GM12878 (cell line): ENCODE measurements at regions of chr1 and their contacts with region 1.

Region 1: GRCh38 chr1:30718636-30719405 is 4.6 kb downstream of the MATN1 start:
- DNase-seq: peak; percentile 71
- ATAC-seq: peak; percentile 84
- H3K4me3 ChIP-seq: peak overlapping the region; percentile 90
- H3K27ac ChIP-seq: peak overlapping the region; percentile 93
- H3K4me1 ChIP-seq: peaks cover 18% of the 10 kb centered on the region
- H3K27me3 ChIP-seq: no peaks in the 10 kb centered on the region
- CTCF ChIP-seq: peak; percentile 86 to 95 (median 87); a peak in 5 of 6 replicates
- EP300 ChIP-seq: peak in 1 of 2 experiments; percentile 22; a peak in 1 of 4 replicates
- POLR2A ChIP-seq: peak; percentile 87
- RAD21 ChIP-seq: no peak

Region 2: GRCh38 chr1:30732277-30732996 is 13.6 kb after region 1 on chr1:
- CTCF ChIA-PET with region 1: interaction called, 81 read pairs
- POLR2A ChIA-PET with region 1: interaction called, 14 read pairs
- RAD21 ChIA-PET with region 1: interaction called, 37 read pairs
- SMC1A ChIA-PET with region 1: interaction called, 18 read pairs
- in situ Hi-C with region 1: no loop called
- intact Hi-C with region 1: no loop called
- DNase-seq: no peak
- ATAC-seq: peak; percentile 63
- H3K4me3 ChIP-seq: no peak overlapping the region
- H3K27ac ChIP-seq: no peak overlapping the region
- H3K4me1 ChIP-seq: peaks cover 23% of the 10 kb centered on the region
- H3K27me3 ChIP-seq: no peaks in the 10 kb centered on the region
- CTCF ChIP-seq: no peak
- EP300 ChIP-seq: no peak
- POLR2A ChIP-seq: peak; percentile 62; the same call in 1 of the 2 replicates
- RAD21 ChIP-seq: no peak

Region 3: DNA sequence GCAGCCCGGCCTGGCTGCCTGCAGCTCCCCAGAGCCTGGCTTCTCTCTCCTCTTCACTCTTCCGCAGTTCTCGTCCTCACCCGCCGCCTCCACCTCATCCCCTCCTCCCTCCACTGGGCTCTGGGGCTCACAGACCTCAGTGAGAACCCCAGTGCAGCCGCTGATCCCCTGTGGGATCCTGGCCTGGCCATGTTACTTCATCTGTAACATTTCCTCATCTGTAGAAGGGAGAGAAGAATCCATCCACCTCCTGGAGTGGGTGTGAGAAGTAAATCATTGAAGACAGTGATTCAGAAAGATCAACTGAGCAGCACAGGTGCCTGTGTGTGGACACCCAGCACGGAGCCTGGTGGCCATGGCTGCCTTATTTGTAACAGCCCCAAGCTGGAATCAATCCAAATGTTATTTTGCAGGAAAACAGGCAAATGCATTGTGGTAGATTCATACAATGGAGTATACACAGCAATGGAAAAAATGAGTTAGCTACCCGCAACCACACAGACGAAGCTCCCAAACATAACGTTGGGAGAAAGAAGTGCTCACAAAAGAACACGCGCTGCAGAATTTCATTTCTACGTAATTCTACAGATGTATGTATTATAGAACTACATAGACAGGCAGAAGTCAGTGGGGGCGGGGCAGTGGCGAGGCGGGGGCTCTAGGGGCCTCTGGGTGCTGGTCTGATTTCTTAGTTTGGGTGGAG is 30.0 kb after region 1 on chr1:
- CTCF ChIA-PET with region 1: interaction called, 76 read pairs
- POLR2A ChIA-PET with region 1: interaction called, 48 read pairs
- RAD21 ChIA-PET with region 1: interaction called, 211 read pairs
- SMC1A ChIA-PET with region 1: interaction called, 556 read pairs
- in situ Hi-C with region 1: no loop called
- intact Hi-C with region 1: no loop called
- DNase-seq: no peak
- ATAC-seq: peak; percentile 1; the same call in 2 of the 3 replicates
- H3K4me3 ChIP-seq: peak overlapping the region; percentile 98
- H3K27ac ChIP-seq: peak overlapping the region; percentile 93
- H3K4me1 ChIP-seq: peaks cover 87% of the 10 kb centered on the region
- H3K27me3 ChIP-seq: no peaks in the 10 kb centered on the region
- CTCF ChIP-seq: no peak
- EP300 ChIP-seq: no peak
- POLR2A ChIP-seq: no peak; the same call in 1 of the 2 replicates
- RAD21 ChIP-seq: no peak

Region 4: DNA sequence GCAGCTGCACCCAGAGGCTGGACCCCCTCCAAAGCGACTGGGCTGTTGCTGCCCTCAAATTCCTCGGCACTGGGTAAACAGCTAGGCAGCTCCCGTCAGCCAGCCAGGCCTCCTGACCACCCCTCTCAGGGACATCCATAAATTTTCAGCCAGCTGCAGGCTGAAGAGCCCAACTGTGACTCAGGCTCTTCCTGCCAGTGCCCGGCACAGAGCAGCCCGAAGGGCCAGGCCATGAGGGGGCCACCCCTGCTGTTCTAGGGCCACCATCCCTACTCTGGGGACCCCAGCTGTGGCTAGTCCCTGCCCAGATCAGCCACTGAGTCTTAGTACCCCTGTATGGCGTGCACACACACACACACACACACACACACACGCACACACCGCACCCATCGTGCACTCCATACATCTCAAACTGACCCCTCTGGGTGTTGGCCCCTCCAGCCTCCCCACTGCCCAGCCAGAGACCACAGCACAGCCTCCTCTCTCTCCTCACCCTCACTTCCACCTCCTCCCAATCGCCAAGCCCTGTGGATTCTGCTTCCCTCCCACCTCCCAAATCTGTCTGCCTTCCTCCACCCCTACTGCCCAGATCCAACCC is 44.9 kb after region 1 on chr1:
- CTCF ChIA-PET with region 1: interaction called, 41 read pairs
- POLR2A ChIA-PET with region 1: interaction called, 8 read pairs
- RAD21 ChIA-PET with region 1: interaction called, 211 read pairs
- SMC1A ChIA-PET with region 1: interaction called, 556 read pairs
- in situ Hi-C with region 1: no loop called
- intact Hi-C with region 1: no loop called
- DNase-seq: no peak
- ATAC-seq: no peak
- H3K4me3 ChIP-seq: no peak overlapping the region
- H3K27ac ChIP-seq: peak overlapping the region; percentile 87
- H3K4me1 ChIP-seq: peaks cover 82% of the 10 kb centered on the region
- H3K27me3 ChIP-seq: no peaks in the 10 kb centered on the region
- CTCF ChIP-seq: no peak
- EP300 ChIP-seq: no peak
- POLR2A ChIP-seq: no peak
- RAD21 ChIP-seq: no peak

Region 5: GRCh38 chr1:30801771-30802198 is 83.0 kb after region 1 on chr1:
- CTCF ChIA-PET with region 1: interaction called, 59 read pairs
- POLR2A ChIA-PET with region 1: no interaction called
- RAD21 ChIA-PET with region 1: interaction called, 36 read pairs
- SMC1A ChIA-PET with region 1: interaction called, 11 read pairs
- in situ Hi-C with region 1: no loop called
- intact Hi-C with region 1: no loop called
- DNase-seq: no peak
- ATAC-seq: peak; percentile 86
- H3K4me3 ChIP-seq: no peak overlapping the region
- H3K27ac ChIP-seq: no peak overlapping the region
- H3K4me1 ChIP-seq: no peaks in the 10 kb centered on the region
- H3K27me3 ChIP-seq: peaks cover 11 to 17% of the 10 kb centered on the region in 2 experiments
- CTCF ChIP-seq: peak; percentile 94 to 95 (median 95)
- EP300 ChIP-seq: no peak
- POLR2A ChIP-seq: no peak
- RAD21 ChIP-seq: peak; percentile 97

Region 6: DNA sequence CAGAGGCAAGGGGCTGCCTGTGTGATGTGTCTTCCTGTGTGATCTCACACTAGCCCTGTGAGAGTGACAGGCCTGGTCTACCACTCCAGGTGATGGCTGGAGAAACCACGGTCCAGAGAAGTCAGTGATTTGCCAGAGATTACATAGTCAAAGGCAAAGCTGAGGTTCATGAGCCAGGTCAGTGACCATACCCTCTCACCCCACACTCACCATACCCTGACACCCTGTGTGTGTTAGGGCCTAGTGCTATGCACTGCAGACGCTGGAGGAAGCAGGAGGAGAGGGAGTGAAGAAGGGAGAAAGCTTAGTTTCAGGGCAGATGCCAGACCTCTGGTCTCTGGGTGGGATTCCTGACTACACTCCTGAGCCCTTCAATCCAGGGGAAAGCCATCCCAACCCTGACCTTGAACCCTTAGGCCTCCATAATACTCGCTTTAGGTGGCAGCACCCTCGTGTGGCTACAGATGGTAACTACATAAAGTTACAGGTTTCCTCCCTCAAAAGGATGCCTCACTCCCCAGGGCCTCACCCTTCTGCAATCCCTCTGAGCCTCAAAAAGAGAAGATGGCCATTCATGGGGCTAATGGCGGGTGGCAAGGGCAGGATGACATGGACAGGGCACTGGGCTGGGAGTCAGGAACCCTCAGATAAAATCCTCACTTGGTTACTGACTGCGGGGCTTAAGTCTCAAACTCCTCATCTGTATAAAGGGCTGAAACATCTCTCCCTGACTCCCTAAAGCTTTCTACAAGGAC is 210.5 kb after region 1 on chr1:
- CTCF ChIA-PET with region 1: interaction called, 17 read pairs
- POLR2A ChIA-PET with region 1: no interaction called
- RAD21 ChIA-PET with region 1: interaction called, 19 read pairs
- SMC1A ChIA-PET with region 1: interaction called, 3 read pairs
- in situ Hi-C with region 1: no loop called
- intact Hi-C with region 1: loop called (anchors 2 kb)
- DNase-seq: no peak
- ATAC-seq: peak; percentile 91
- H3K4me3 ChIP-seq: no peak overlapping the region
- H3K27ac ChIP-seq: no peak overlapping the region
- H3K4me1 ChIP-seq: no peaks in the 10 kb centered on the region; the same call in 1 of the 2 replicates
- H3K27me3 ChIP-seq: no peaks in the 10 kb centered on the region
- CTCF ChIP-seq: peak; percentile 69 to 80 (median 79)
- EP300 ChIP-seq: no peak
- POLR2A ChIP-seq: no peak
- RAD21 ChIP-seq: peak; percentile 78